ENCODE measurements at regions of chr1 and their contacts with region 1.

Region 1: GRCh38 chr1:93021539-93022134 is 57.4 kb upstream of the MTF2 start:
- DNase-seq: peak; percentile 69
- ATAC-seq: peak; percentile 56; the same call in 1 of the 2 replicates
- H3K4me3 ChIP-seq: no peak overlapping the region
- H3K27ac ChIP-seq: no peak overlapping the region
- H3K4me1 ChIP-seq: peaks cover 18% of the 10 kb centered on the region
- H3K27me3 ChIP-seq: no peaks in the 10 kb centered on the region
- CTCF ChIP-seq: peak; percentile 89

Region 2: DNA sequence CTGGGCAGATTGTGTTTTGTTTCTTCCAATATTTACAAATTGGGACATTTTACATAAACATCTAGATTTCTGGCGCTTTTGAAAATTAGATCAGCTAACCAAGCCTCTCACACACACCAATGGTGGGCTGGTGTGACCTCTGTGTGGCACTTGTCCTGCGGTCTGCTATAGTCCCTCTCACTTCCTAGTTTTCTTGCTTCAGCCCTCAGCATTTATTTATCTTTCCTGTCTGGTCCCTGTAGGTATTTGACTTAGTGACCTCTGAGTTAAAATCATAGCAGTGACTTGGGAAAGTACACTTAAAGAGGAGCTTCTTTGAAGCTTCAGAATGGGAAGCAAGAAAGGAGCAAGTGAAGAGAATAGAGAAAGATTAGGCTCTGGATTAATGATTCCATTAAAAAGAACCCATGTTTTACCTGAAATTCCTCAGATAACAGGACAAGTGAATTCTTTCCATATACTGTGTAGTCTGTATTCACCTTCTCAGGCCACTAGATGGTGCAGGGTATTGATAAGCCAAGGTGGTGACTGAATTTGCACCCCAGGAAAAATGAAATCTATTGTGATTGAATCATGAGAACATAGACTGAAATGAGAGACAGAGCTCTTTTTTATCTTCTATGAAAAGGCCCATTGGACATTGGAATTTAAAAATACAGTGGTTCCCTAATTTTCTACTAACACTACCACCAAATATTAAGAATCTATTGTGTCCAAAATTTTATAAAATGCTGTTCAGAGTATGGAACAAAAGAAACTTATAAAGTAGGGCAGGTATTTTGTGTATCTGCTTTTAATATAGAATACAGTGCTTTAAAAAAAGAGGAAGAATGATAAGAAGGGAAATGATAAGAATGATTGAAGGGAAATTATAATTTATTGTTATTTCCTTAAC is 53.3 kb before region 1 on chr1:
- CTCF ChIA-PET with region 1: no interaction called
- POLR2A ChIA-PET with region 1: no interaction called
- intact Hi-C with region 1: loop called (anchors 2 kb)
- DNase-seq: peak; percentile 59
- ATAC-seq: peak; percentile 68
- H3K4me3 ChIP-seq: no peak overlapping the region
- H3K27ac ChIP-seq: no peak overlapping the region
- H3K4me1 ChIP-seq: no peaks in the 10 kb centered on the region
- H3K27me3 ChIP-seq: no peaks in the 10 kb centered on the region
- CTCF ChIP-seq: peak; percentile 81

Region 3: DNA sequence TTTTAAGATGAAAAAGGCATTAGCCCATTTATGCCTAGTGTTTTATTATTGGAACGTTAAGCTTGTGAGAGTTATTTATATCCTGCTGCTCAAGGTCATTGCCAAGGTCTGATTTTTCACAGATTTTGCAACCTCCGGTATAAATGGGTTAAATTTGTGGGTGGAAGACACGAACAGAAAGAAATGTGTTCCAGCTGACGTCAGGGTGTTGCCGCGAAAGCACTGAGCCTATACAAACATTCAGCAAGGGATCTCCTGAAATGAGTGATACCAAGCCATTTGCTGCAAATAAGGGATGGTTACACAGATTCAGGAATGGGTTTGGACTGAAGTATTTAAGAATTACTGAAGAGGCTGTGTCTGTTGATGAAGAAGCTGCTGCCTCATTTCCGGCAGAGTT is 126.4 kb after region 1 on chr1:
- CTCF ChIA-PET with region 1: no interaction called
- POLR2A ChIA-PET with region 1: no interaction called
- intact Hi-C with region 1: no loop called
- DNase-seq: no peak
- ATAC-seq: no peak
- H3K4me3 ChIP-seq: no peak overlapping the region
- H3K27ac ChIP-seq: no peak overlapping the region
- H3K4me1 ChIP-seq: no peaks in the 10 kb centered on the region
- H3K27me3 ChIP-seq: no peaks in the 10 kb centered on the region
- CTCF ChIP-seq: no peak

Region 4: DNA sequence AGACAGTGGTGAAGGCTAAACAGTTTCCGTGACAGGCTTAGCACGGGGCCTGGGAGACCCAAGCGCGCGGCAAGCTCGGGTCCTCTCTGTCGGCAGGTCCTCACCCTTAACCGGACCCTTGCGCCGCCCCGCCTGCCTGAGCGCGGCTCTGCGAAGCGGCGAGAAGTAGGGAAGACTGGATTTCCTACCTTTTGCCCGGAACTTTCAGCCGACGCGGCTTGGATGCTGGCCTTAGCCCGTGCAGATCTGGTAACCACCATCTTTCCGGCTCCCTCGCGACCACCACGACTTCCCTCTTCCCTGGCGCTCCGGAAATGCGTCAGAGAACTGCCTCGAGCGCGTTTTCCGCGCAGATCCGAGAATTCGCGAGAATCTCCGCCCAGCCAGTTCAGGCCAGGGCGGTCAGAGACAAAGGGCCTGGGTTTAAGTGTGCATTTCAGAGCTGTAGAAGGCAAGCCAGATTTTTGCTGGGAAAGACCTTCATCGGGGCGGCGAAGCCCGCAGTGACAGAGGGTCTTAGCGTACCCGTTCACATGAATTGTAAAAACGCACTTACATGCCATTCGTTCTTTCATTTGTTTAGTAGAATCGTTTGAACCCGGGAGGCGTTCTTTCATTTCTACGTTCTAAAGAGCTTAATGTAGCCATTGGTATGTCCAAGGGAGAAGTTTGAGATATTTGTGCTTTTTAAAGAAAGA is 857.4 kb after region 1 on chr1 and contains the start of gene DNTTIP2:
- CTCF ChIA-PET with region 1: no interaction called
- POLR2A ChIA-PET with region 1: no interaction called
- intact Hi-C with region 1: no loop called
- DNase-seq: peak; percentile 95
- ATAC-seq: peak; percentile 90
- H3K4me3 ChIP-seq: peak within 1 kb of the TSS; percentile 90
- H3K27ac ChIP-seq: peak within 1 kb of the TSS; percentile 91
- H3K4me1 ChIP-seq: peaks cover 20% of the 10 kb centered on the region
- H3K27me3 ChIP-seq: no peaks in the 10 kb centered on the region
- CTCF ChIP-seq: no peak
- total RNA-seq, gene DNTTIP2: 47.8 and 47.9 TPM in 2 replicates

Measured in PC-3 (cell line).